GM10248 (cell line): ENCODE measurements at regions of chr9 and their contacts with region 1.

Region 1: DNA sequence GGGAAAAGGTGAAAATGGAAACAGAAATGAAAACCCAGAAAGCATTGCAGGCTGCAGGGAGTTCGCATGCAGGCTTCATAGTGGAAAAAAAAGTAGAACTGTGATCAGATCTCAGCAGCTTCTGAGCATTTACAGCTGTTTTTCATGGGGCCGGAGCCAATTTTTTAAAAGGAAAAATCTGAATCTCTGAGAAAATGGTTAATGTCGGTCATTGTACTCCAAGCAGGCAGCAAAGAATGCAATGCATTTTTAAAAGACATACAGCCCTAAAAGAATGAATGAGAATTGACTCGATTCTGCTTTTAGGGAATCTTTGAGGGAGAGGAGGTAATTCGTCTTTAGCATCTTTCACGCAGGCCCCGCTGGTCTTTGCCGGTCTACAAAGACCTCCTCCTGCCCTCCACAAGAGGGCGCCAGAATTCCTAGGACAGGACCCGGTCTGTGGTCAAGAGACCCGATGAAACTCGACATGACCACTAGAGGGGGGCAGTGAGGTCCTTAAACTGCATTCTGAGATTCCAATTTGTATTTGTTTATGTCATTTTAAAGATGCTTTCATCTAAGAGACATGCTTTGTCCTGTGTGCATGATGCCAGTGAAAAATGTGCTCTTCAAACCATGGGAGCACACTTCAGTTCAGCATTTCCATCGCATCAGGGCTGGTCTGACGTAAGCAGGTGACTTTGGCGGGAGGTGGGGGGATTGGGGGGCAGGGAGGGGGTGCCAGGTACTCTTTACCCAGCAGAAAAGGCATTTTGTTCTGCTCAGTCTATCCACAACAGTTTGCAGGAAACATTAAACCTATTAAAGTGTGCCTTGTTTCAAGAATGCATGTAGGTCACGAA is 43.7 kb upstream of the TMEM252 start:
- DNase-seq: peak; percentile 86
- CTCF ChIP-seq: peak; percentile 99

Region 2: DNA sequence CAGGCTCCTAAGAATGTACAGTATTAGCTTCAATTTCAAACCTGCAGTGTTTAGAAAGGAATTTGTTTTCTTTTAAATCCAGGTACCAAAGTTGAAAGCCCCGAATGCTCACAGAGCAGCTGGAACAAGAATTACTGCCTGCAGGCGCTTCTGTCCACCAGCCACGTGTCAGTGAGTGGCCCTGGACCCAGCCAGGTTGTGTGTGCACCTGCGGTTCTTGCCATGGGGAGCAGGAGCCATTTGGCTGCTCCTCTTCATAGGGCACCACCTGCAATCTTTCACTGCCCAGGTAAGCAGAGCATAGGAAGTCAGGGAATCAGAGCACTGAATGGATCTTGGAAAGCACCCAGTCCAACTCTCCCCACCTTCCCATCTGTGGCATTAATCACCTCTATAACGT is 41.1 kb after region 1 on chr9:
- CTCF ChIA-PET with region 1: no interaction called
- POLR2A ChIA-PET with region 1: no interaction called
- DNase-seq: no peak
- CTCF ChIP-seq: no peak

Region 3: DNA sequence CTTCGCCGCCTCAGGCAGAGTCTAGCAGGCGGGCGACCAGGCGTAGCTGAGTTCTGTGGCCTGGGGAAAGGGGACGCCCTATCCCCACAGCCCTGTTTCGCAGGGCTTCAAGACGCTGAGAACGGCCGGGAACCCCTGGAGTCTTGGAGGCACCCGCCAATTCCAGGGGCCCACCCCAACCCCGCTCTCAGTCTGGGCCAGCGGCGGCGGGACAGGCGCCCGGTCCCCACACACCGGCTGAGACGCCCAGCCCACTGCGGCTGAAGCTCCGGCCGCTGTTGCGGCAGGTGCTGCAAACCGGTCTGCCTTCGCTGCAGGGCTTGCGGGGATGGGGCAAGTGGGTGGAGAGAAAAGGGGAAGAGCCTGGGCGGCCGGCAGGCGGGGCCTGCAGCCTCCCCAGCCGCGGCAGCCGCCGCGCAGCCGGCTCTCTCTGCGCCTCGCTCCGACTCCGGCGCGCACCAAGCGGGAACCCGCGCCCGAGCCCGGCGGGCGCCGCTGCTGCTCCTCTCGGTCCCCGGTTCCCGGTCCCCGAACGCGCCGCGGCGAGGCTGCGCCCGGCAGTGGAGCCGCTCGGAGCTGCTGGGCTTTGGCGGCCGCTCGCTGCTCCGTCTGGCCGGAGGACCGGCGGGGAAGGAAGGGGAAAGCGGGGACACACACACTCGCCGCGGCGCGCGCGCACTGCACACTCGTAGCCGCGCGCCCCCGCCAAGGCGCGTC is 120.6 kb after region 1 on chr9 and contains the start of gene PIP5K1B:
- CTCF ChIA-PET with region 1: interaction called, 17 read pairs
- POLR2A ChIA-PET with region 1: interaction called, 3 read pairs
- DNase-seq: peak; percentile 91
- CTCF ChIP-seq: no peak

Region 4: DNA sequence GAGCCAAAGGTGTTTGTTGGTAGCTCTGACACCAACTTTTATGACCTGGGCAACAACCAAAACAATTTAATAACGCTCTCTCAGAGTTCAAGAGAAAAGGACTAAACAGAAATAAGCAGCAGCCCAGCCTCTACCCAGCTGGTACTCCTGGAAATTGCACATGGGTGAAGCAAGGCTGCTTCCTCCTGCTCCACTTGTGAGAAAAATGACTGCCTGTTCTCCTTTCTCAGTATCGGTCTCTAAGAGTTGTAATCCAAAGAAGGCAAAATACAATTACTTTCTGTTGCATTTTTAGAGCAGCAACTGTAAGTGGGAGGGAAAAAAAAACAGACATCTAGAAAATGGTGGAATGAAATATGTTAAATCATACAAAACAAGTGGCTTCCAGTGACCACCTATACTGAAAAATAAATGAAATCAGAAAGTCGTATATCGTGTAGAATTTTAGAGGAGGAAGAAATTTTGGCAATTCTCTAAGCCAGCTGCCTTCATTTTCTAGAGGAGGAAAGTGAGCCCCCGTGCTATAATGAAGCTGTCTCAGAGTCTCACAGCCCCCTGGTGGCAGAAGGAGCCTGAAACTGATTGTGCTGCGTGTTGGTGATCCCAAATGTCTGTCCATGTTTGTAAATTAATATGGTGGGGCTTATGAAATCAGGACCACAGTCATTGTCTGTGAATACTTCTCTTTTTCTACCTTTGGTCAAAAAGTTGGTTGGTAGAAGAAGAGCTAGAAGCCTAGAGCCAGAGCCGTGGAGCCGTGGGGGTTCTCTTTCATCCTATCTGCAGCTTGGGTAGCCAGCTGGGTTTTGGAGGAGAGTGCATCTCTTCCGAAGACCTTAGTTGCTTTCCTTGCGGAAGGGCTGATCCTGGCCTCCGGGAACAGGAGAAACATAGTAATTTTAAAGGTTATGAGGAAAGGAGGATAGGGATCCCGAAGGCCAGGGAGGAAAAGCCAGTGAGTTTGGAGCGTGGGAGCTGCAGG is 260.5 kb after region 1 on chr9:
- CTCF ChIA-PET with region 1: interaction called, 11 read pairs
- POLR2A ChIA-PET with region 1: no interaction called
- DNase-seq: peak; percentile 43
- CTCF ChIP-seq: peak; percentile 60